ENCODE measurements at regions of chr1 and their contacts with region 1.

Region 1: DNA sequence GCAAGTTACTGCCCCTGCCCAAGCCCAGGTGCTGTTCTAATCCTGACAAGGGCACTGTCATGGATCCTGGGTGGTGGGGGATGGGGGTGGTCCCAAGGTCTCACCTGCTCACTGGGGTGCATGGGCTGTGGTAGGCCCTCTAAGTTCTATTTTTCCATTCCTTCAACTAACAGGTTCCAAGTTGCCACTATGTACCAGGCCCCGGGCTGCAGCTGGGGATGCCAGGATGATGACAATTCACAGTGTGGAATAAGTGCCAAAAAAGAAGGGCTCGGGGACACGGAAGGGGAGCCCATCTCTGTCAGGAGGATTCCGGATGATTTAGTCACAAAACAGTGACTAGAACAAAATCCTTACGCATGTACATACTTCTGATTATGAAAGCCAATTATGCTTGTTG is 76.0 kb downstream of the STUM start:
- DNase-seq: no peak
- ATAC-seq: no peak
- H3K4me3 ChIP-seq: no peak overlapping the region
- H3K27ac ChIP-seq: no peak overlapping the region
- H3K4me1 ChIP-seq: no peaks in the 10 kb centered on the region
- H3K27me3 ChIP-seq: peaks cover 3 to 36% of the 10 kb centered on the region in 2 experiments; a peak in 3 of 5 replicates
- CTCF ChIP-seq: no peak
- EP300 ChIP-seq: no peak
- POLR2A ChIP-seq: no peak
- RAD21 ChIP-seq: no peak

Region 2: GRCh38 chr1:226186124-226187018 is 438.2 kb before region 1 on chr1 and contains the start of gene ACBD3:
- CTCF ChIA-PET with region 1: no interaction called
- POLR2A ChIA-PET with region 1: no interaction called
- in situ Hi-C with region 1: no loop called
- intact Hi-C with region 1: loop called (anchors 5 kb)
- DNase-seq: peak; percentile 93 to 96 (median 94)
- ATAC-seq: peak; percentile 93
- H3K4me3 ChIP-seq: peak within 1 kb of the TSS; percentile 97
- H3K27ac ChIP-seq: peak within 1 kb of the TSS; percentile 88
- H3K4me1 ChIP-seq: peaks cover 11 to 19% of the 10 kb centered on the region in 2 experiments
- H3K27me3 ChIP-seq: no peaks in the 10 kb centered on the region
- CTCF ChIP-seq: peak in 2 of 3 experiments; percentile 27 to 44; a peak in 2 of 6 replicates
- EP300 ChIP-seq: no peak
- POLR2A ChIP-seq: peak; percentile 95
- RAD21 ChIP-seq: no peak
- polyA plus RNA-seq, gene ACBD3: 11.1 to 14.3 TPM

Region 3: GRCh38 chr1:226702957-226703831 is 78.7 kb after region 1 on chr1:
- CTCF ChIA-PET with region 1: no interaction called
- POLR2A ChIA-PET with region 1: no interaction called
- in situ Hi-C with region 1: no loop called
- intact Hi-C with region 1: no loop called
- DNase-seq: peak; percentile 49 to 90 (median 86)
- ATAC-seq: peak; percentile 86
- H3K4me3 ChIP-seq: peak overlapping the region; percentile 31
- H3K27ac ChIP-seq: peak overlapping the region; percentile 16; the same call in 1 of the 3 replicates
- H3K4me1 ChIP-seq: peaks cover 8 to 9% of the 10 kb centered on the region in 2 experiments; a peak in 2 of 5 replicates
- H3K27me3 ChIP-seq: peaks cover 27 to 45% of the 10 kb centered on the region in 2 experiments
- CTCF ChIP-seq: no peak
- EP300 ChIP-seq: no peak
- POLR2A ChIP-seq: no peak
- RAD21 ChIP-seq: no peak